Activated B cell treated with CpG ODN at 0.5 μM for 24 hours (primary cell): ENCODE measurements at regions of chr19 and their contacts with region 1.

Region 1: GRCh38 chr19:52942386-52943133 is 19.3 kb upstream of the ZNF888 start:
- DNase-seq: peak; percentile 98
- ATAC-seq: peak; percentile 99
- H3K4me3 Mint-ChIP-seq: peak overlapping the region; percentile 96
- H3K27ac Mint-ChIP-seq: peak overlapping the region; percentile 92
- H3K4me1 Mint-ChIP-seq: peaks cover 31% of the 10 kb centered on the region
- H3K27me3 Mint-ChIP-seq: no peaks in the 10 kb centered on the region
- CTCF ChIP-seq: no peak

Region 2: DNA sequence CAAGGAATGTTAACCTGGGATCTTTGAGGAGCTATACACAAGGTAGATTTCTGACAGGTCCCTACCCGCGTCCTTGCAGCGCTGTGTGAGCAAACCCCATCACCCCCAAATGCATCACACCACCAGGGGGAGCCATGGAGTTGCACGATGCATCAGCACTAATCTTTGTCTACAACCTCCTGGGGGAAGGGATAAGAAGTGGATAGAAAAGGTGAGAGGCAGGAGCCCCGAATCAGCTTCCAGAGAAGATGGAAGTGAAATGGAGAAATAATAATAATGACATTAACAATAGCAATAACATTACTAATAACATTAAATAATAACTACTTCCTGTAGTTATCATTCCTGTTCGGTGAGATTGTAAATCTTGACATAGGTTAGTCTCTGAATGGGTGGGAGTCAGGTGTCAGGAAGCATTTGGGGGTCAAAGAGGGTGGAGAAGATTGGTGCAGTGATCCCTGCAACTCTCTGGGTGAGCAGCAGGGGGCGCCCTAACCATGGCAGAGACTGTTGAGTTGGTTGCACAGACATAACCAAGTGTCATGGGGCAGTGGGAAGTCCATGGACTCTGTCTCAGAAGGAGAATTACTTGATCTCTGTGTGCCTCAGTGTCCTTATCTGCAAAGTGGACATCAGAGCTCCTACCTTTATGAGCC is 1784.0 kb before region 1 on chr19:
- CTCF ChIA-PET with region 1: no interaction called
- POLR2A ChIA-PET with region 1: no interaction called
- intact Hi-C with region 1: no loop called
- DNase-seq: no peak
- ATAC-seq: peak; percentile 40
- H3K4me3 Mint-ChIP-seq: no peak overlapping the region
- H3K27ac Mint-ChIP-seq: no peak overlapping the region
- H3K4me1 Mint-ChIP-seq: no peaks in the 10 kb centered on the region
- H3K27me3 Mint-ChIP-seq: peaks cover 18% of the 10 kb centered on the region
- CTCF ChIP-seq: peak; percentile 87

Region 3: DNA sequence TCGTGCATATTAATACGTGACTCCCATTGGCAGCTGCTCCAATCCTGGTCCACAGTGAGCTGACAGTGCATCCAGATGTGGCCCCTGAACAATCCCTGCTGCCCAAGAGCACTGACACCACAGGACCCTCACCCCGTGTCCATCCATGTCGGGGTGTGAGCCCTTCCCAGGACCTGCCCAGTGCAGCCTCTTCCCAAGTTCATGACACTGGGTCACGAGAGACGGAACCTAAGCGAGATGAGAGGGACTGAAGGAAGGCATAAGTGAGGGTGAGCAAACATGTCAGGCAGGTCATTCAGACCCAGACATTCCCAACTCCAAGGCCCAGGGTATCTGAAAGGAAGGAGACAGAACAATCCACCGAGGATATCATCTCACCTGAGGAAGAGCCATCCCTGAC is 88.7 kb before region 1 on chr19:
- CTCF ChIA-PET with region 1: no interaction called
- POLR2A ChIA-PET with region 1: interaction called, 9 read pairs
- intact Hi-C with region 1: loop called (anchors 1 kb)
- DNase-seq: no peak
- ATAC-seq: no peak
- H3K4me3 Mint-ChIP-seq: no peak overlapping the region
- H3K27ac Mint-ChIP-seq: no peak overlapping the region
- H3K4me1 Mint-ChIP-seq: peaks cover 22% of the 10 kb centered on the region
- H3K27me3 Mint-ChIP-seq: no peaks in the 10 kb centered on the region
- CTCF ChIP-seq: no peak

Region 4: GRCh38 chr19:52922841-52923777 is 19.5 kb before region 1 on chr19 and contains the start of gene ZNF888:
- CTCF ChIA-PET with region 1: no interaction called
- POLR2A ChIA-PET with region 1: interaction called, 12 read pairs
- intact Hi-C with region 1: loop called (anchors 2 kb)
- DNase-seq: peak; percentile 81
- ATAC-seq: peak; percentile 100
- H3K4me3 Mint-ChIP-seq: peak within 1 kb of the TSS; percentile 95
- H3K27ac Mint-ChIP-seq: peak within 1 kb of the TSS; percentile 88
- H3K4me1 Mint-ChIP-seq: peaks cover 29% of the 10 kb centered on the region
- H3K27me3 Mint-ChIP-seq: no peaks in the 10 kb centered on the region
- CTCF ChIP-seq: no peak
- total RNA-seq, gene ZNF888: 9.0 and 11.9 TPM in 2 replicates

Region 5: DNA sequence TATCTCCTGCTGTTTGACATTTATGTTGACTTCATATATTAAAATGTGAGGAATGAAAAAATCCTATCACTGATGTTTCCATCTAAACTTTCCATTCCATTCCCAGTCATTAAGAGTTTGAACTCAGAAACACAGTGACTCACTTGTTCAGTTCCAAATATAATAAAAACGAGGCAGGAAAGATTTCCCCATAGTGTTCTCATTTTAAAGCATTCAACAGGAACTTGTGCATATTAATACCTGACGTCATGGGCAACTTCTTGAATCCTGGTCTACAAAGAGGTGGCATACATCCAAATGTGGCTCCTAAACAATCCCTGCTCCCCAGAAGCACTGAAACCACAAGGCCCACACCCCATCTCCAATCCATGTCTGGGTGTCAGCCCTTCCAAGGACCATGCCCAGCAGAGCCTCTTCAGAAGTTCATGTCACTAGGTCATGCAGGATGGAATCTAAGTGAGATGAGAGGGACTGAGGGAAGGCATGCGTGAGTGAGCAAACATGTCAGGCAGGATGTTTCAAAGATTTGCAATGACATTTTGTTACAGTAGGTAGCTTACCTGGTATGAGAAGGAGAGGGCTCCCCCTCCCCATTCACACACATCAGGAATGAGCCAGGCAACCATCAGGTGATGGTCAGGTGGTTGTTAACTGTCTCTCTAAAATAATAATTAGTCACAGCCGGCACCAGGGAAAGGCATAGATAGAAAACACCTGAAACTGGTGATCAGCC is 92.6 kb after region 1 on chr19:
- CTCF ChIA-PET with region 1: no interaction called
- POLR2A ChIA-PET with region 1: no interaction called
- intact Hi-C with region 1: no loop called
- DNase-seq: no peak
- ATAC-seq: no peak
- H3K4me3 Mint-ChIP-seq: no peak overlapping the region
- H3K27ac Mint-ChIP-seq: no peak overlapping the region
- H3K4me1 Mint-ChIP-seq: peaks cover 3% of the 10 kb centered on the region
- H3K27me3 Mint-ChIP-seq: peaks cover 14% of the 10 kb centered on the region
- CTCF ChIP-seq: no peak